Naive thymus-derived CD4-positive, alpha-beta T cell (primary cell): ENCODE measurements at regions of chrX and their contacts with region 1.

Region 1: GRCh38 chrX:45849253-45849862 is 648.7 kb upstream of the DIPK2B start:
- DNase-seq: peak in 6 of 9 donors; percentile 10 to 36 (median 22)
- ATAC-seq: peak; percentile 76
- H3K4me3 ChIP-seq: peak overlapping the region; percentile 77
- H3K4me3 Mint-ChIP-seq: peak overlapping the region; percentile 88 to 95 (median 92)
- H3K27ac ChIP-seq: no peak overlapping the region
- H3K27ac Mint-ChIP-seq: peak overlapping the region in 7 of 9 donors; percentile 16 to 91 (median 69)
- H3K4me1 ChIP-seq: no peaks in the 10 kb centered on the region
- H3K4me1 Mint-ChIP-seq: peaks cover 0 to 45% (median 9%) of the 10 kb centered on the region in 7 donors
- H3K27me3 ChIP-seq: no peaks in the 10 kb centered on the region
- H3K27me3 Mint-ChIP-seq: no peaks in the 10 kb centered on the region

Region 2: DNA sequence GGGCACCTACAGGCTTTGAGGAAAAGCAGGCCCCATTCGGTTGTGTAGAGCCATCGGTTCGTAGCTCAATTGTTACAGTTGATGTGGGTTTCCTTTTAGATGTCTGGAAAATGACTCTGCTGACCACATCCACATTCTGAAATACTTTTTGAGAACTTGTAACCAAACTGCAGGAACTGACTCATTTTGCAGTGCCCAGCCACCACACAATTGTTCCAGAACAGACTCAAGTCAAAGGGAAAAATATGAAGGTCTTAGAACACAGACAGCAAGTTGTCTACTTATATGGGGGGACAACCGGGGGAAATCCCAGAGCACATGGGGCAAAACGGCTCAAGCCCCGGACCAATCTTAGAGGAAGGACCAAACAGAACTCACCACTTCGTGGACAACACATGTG is 91.0 kb before region 1 on chrX:
- CTCF ChIA-PET with region 1: no interaction called
- POLR2A ChIA-PET with region 1: no interaction called
- intact Hi-C with region 1: loop called (anchors 1 to 10 kb)
- DNase-seq: peak in 2 of 9 donors; percentile 9 to 40
- ATAC-seq: peak; percentile 47
- H3K4me3 ChIP-seq: peak overlapping the region; percentile 29
- H3K4me3 Mint-ChIP-seq: peak overlapping the region in 9 of 10 donors; percentile 62 to 84 (median 70)
- H3K27ac ChIP-seq: peak overlapping the region; percentile 31
- H3K27ac Mint-ChIP-seq: peak overlapping the region in 8 of 9 donors; percentile 49 to 93 (median 72)
- H3K4me1 ChIP-seq: peaks cover 31 to 67% of the 10 kb centered on the region in 2 donors
- H3K4me1 Mint-ChIP-seq: peaks cover 28 to 67% (median 45%) of the 10 kb centered on the region in 7 donors
- H3K27me3 ChIP-seq: no peaks in the 10 kb centered on the region
- H3K27me3 Mint-ChIP-seq: no peaks in the 10 kb centered on the region

Region 3: GRCh38 chrX:45801554-45801953 is 47.8 kb before region 1 on chrX:
- CTCF ChIA-PET with region 1: interaction called, 4 read pairs
- POLR2A ChIA-PET with region 1: interaction called, 24 read pairs
- intact Hi-C with region 1: loop called (anchors 1 kb)
- DNase-seq: peak in 5 of 9 donors; percentile 9 to 49 (median 35)
- ATAC-seq: peak; percentile 66
- H3K4me3 ChIP-seq: no peak overlapping the region
- H3K4me3 Mint-ChIP-seq: peak overlapping the region in 6 of 10 donors; percentile 19 to 50 (median 33)
- H3K27ac ChIP-seq: no peak overlapping the region
- H3K27ac Mint-ChIP-seq: peak overlapping the region in 5 of 9 donors; percentile 18 to 56 (median 49)
- H3K4me1 ChIP-seq: peaks cover 11 to 20% of the 10 kb centered on the region in 2 donors
- H3K4me1 Mint-ChIP-seq: peaks cover under 1 to 60% (median 25%) of the 10 kb centered on the region in 7 donors
- H3K27me3 ChIP-seq: no peaks in the 10 kb centered on the region
- H3K27me3 Mint-ChIP-seq: no peaks in the 10 kb centered on the region

Region 4: GRCh38 chrX:46376246-46376885 is 527.0 kb after region 1 on chrX:
- CTCF ChIA-PET with region 1: no interaction called
- POLR2A ChIA-PET with region 1: no interaction called
- intact Hi-C with region 1: loop called (anchors 1 to 5 kb)
- DNase-seq: peak in 4 of 9 donors; percentile 18 to 31 (median 24)
- ATAC-seq: no peak
- H3K4me3 ChIP-seq: no peak overlapping the region
- H3K4me3 Mint-ChIP-seq: no peak overlapping the region
- H3K27ac ChIP-seq: no peak overlapping the region
- H3K27ac Mint-ChIP-seq: no peak overlapping the region
- H3K4me1 ChIP-seq: no peaks in the 10 kb centered on the region
- H3K4me1 Mint-ChIP-seq: peaks cover 0 to 4% (median 0%) of the 10 kb centered on the region in 7 donors
- H3K27me3 ChIP-seq: no peaks in the 10 kb centered on the region
- H3K27me3 Mint-ChIP-seq: peaks cover 0 to 7% (median 0%) of the 10 kb centered on the region in 5 donors

Region 5: GRCh38 chrX:46758906-46759644 is 909.7 kb after region 1 on chrX and contains the start of gene SLC9A7:
- CTCF ChIA-PET with region 1: no interaction called
- POLR2A ChIA-PET with region 1: no interaction called
- intact Hi-C with region 1: loop called in 1 of 2 experiments (anchors 5 kb)
- DNase-seq: peak; percentile 55 to 81 (median 75)
- ATAC-seq: peak; percentile 89
- H3K4me3 ChIP-seq: peak within 1 kb of the TSS; percentile 61
- H3K4me3 Mint-ChIP-seq: peak within 1 kb of the TSS; percentile 87 to 98 (median 90)
- H3K27ac ChIP-seq: peak within 1 kb of the TSS; percentile 41
- H3K27ac Mint-ChIP-seq: peak within 1 kb of the TSS in 8 of 9 donors; percentile 15 to 95 (median 72)
- H3K4me1 ChIP-seq: peaks cover 0 to 4% of the 10 kb centered on the region in 2 donors
- H3K4me1 Mint-ChIP-seq: peaks cover 4 to 24% (median 13%) of the 10 kb centered on the region in 7 donors
- H3K27me3 ChIP-seq: no peaks in the 10 kb centered on the region
- H3K27me3 Mint-ChIP-seq: peaks cover 0 to 18% (median 3%) of the 10 kb centered on the region in 5 donors
- total RNA-seq, gene SLC9A7: 3.0 to 11.3 (median 4.4) TPM